ENCODE measurements at regions of chrX and their contacts with region 1.

Region 1: DNA sequence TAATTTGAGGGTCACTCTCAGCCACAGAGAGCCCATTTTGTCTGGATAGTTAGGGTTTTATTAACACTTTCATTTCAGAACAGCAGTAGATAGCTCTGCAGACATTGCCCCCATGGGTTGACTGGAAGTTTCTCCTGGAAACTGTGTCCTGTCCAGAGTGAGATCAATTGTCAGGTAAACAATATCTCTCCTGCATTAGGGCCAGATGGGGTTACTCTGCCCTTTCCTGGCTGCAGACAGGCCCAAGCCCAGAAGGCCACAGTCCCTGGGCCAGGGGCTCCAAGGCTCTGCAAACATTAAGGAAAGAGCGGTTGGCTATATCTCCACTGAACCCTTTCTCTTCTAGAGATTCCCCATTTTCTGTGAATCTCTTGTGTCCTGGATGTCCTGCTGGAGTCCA is 436.8 kb upstream of the PRKX start:
- DNase-seq: no peak
- ATAC-seq: no peak
- H3K4me3 ChIP-seq: no peak overlapping the region
- H3K27ac ChIP-seq: no peak overlapping the region
- H3K4me1 ChIP-seq: no peaks in the 10 kb centered on the region
- H3K27me3 ChIP-seq: no peaks in the 10 kb centered on the region
- CTCF ChIP-seq: no peak
- POLR2A ChIP-seq: no peak
- RAD21 ChIP-seq: no peak

Region 2: GRCh38 chrX:4670615-4671014 is 520.4 kb after region 1 on chrX:
- CTCF ChIA-PET with region 1: no interaction called
- POLR2A ChIA-PET with region 1: no interaction called
- dilution Hi-C with region 1: no loop called
- in situ Hi-C with region 1: no loop called
- intact Hi-C with region 1: loop called (anchors 10 kb)
- DNase-seq: no peak
- ATAC-seq: no peak
- H3K4me3 ChIP-seq: no peak overlapping the region
- H3K27ac ChIP-seq: no peak overlapping the region
- H3K4me1 ChIP-seq: no peaks in the 10 kb centered on the region
- H3K27me3 ChIP-seq: no peaks in the 10 kb centered on the region
- CTCF ChIP-seq: no peak
- POLR2A ChIP-seq: no peak
- RAD21 ChIP-seq: no peak

Region 3: DNA sequence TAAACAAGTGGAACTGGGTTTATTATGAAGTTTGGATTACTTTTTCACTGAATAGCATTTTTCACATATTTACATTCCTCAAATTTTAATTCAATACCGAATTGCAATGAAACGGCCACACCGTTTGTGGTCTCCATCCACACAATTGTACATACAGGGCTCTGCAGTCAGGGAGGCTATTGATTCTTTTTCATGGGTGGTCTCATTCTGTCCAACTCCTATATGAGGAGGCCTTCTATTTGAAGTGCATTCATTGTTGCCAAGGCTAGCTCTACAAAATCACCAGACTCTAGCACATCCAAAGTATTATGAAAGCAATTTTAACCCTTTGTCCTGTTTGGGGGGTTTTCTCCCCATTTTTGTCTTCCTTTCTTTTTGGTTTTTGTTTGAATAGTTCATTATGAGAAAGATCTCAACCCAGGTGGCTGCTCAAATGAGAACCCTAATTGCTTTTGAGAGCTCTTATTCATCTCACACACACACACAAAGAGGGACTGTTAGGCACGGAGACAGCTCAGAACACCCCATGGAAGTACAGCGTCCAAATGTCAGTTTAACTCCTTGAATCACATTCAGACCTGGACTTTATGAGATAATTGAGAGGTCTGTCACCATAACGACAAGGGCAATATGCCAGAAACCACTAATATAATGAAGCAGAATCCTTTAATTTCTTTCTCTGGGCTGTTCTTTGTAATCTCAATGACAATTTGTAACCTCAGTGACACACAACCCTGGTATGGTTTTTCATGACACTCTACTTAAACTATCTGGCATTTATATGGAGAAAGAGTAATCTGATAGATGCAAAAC is 1999.0 kb after region 1 on chrX:
- CTCF ChIA-PET with region 1: no interaction called
- POLR2A ChIA-PET with region 1: no interaction called
- dilution Hi-C with region 1: no loop called
- in situ Hi-C with region 1: no loop called
- intact Hi-C with region 1: no loop called
- DNase-seq: no peak
- ATAC-seq: no peak
- H3K4me3 ChIP-seq: no peak overlapping the region
- H3K27ac ChIP-seq: no peak overlapping the region
- H3K4me1 ChIP-seq: no peaks in the 10 kb centered on the region
- H3K27me3 ChIP-seq: no peaks in the 10 kb centered on the region
- CTCF ChIP-seq: no peak
- POLR2A ChIP-seq: no peak
- RAD21 ChIP-seq: no peak